Spleen (tissue), 13 donors: ENCODE measurements at regions of chr1 and their contacts with region 1.

Region 1: DNA sequence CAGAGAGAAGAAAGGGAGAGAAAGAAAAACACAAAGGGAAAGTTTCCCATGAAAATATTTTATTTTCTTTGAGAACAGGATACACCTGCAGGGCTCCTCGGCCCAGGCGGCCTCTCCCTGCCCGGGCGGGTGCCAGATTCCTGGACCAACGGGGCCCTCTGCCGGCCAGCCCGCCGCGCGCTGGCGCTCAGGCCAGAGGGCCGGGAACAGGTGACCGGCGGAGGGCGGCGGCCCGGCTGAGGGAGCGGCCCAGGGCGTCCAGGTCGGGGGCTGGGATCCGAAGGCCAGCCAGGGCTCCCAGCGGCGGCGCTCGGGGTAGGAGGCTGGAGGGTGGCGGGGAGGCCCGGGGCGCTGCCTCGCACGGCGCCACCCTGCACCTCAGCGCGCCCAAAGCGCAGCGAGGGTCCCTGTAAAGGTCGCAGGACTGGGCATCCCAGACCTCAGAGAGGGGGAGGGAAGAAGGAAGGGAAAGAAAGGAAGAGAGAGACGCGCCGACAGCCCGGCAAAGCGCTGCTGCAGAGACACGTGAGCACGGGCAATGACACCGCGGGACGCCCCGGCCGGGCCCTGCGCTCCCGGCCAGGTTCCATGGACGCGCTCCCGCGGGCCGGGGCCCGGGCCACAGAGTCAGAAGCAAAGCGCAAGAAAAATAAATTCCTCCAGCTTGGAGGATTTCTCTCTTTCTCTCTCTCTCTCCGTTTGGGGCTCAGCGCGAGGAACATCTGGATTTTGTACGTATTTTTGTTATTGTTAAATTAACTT is 927 bp downstream of the WNT9A start:
- DNase-seq: peak; percentile 91
- H3K4me3 ChIP-seq: peak overlapping the region; percentile 19 to 74 (median 48)
- H3K27ac ChIP-seq: peak overlapping the region in 6 of 8 donors; percentile 26 to 81 (median 70)
- H3K4me1 ChIP-seq: peaks cover 18 to 47% (median 34%) of the 10 kb centered on the region in 6 donors
- H3K27me3 ChIP-seq: peaks cover 0 to 76% (median 28%) of the 10 kb centered on the region in 7 donors
- CTCF ChIP-seq: peak; percentile 27 to 86 (median 75)
- POLR2A ChIP-seq: no peak

Region 2: DNA sequence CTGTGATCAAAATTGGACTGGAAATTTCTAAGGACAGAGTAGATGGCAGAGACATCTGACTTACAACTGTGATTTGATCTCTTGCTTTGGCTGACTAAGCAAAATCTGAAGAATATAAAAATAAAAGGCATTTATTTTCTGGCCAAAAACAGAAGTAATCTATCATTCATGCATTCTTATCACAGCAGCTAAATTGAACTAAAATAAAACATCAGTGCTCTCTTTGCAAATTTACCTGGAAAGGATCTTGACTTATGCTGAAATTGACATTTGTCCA is 464.8 kb before region 1 on chr1:
- intact Hi-C with region 1: loop called (anchors 5 kb)
- DNase-seq: no peak
- H3K4me3 ChIP-seq: no peak overlapping the region
- H3K27ac ChIP-seq: no peak overlapping the region
- H3K4me1 ChIP-seq: no peaks in the 10 kb centered on the region
- H3K27me3 ChIP-seq: peaks cover 0 to 13% (median 0%) of the 10 kb centered on the region in 7 donors
- CTCF ChIP-seq: no peak
- POLR2A ChIP-seq: no peak

Region 3: DNA sequence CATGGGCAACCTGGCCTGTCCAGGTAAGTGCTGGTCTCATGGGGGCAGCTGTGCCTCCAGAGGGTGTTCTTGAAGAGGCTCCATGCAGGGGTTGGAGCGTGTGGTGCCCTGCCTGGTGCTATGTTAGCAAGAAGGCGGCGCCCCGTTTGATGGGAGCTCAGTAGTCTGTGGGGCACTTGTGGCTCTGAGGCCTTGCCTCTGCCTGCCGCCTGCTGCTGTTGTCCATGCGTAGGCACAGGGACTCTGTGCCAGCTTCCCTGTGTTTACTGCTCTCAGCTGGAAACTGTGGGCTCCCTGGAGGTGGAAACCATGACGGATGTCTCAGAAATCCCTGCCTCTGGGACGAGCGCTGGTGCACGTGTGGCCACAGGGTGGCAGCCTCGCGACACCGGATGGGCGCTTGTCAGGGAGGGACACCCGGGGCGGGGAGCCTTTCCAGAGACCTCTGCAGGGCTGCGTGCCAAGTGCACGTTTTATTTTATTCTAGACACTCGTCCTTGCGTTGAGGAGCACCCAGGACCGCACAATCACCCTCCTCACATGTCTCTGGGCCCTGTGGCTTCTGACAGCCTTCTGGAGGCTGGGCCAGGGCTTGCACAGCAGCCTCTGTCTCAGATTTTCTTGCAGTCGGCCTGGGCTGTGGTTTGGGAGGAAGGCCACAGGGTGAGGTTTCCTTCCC is 184.4 kb before region 1 on chr1:
- intact Hi-C with region 1: loop called (anchors 5 kb)
- DNase-seq: peak; percentile 96
- H3K4me3 ChIP-seq: peak overlapping the region in 2 of 8 donors; percentile 5 to 40
- H3K27ac ChIP-seq: peak overlapping the region in 5 of 8 donors; percentile 53 to 78 (median 64)
- H3K4me1 ChIP-seq: peaks cover 33 to 67% (median 57%) of the 10 kb centered on the region in 6 donors
- H3K27me3 ChIP-seq: no peaks in the 10 kb centered on the region
- CTCF ChIP-seq: peak; percentile 79 to 92 (median 89)
- POLR2A ChIP-seq: no peak